Mammary epithelial cell (primary cell): ENCODE measurements at regions of chr2 and their contacts with region 1.

Region 1: DNA sequence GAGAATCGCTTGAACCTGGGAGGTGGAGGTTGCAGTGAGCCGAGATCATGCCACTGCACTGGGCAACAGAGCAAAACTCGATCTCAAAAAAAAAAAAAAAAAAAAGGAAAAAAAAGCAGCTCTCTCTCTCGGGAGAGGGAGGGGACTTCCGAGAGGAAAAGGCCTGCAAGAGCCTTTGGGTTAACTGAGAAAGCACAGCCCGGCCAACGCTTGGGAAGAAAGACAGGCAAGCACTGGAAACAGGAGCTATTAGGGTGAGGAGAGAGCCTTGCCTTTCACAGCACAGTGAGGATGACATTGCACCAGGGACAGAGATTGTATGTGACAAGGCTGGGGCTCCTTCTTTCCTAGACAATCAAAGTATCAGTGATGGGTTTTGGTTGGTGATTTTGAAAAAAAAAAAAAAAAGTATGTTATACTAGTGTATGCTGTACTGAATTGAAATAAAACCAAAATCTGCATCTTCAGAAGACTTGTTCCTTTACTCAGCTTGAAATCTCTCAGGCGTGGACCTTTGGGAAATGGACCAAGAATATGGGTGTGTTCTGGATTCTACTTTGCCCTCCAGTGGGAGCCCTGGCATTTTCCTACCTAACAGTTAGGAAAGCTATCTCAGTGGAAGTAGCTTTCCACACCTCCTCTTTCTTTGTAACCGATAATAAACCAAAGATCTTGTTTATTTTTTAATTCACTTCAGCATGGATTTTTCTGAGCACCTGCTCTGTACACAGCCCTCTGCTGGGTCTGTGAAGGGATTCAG is 16.7 kb downstream of the SRSF7 start:
- DNase-seq: no peak
- H3K4me3 ChIP-seq: no peak overlapping the region
- H3K27ac ChIP-seq: no peak overlapping the region
- H3K4me1 ChIP-seq: no peaks in the 10 kb centered on the region
- H3K27me3 ChIP-seq: no peaks in the 10 kb centered on the region
- CTCF ChIP-seq: no peak

Region 2: DNA sequence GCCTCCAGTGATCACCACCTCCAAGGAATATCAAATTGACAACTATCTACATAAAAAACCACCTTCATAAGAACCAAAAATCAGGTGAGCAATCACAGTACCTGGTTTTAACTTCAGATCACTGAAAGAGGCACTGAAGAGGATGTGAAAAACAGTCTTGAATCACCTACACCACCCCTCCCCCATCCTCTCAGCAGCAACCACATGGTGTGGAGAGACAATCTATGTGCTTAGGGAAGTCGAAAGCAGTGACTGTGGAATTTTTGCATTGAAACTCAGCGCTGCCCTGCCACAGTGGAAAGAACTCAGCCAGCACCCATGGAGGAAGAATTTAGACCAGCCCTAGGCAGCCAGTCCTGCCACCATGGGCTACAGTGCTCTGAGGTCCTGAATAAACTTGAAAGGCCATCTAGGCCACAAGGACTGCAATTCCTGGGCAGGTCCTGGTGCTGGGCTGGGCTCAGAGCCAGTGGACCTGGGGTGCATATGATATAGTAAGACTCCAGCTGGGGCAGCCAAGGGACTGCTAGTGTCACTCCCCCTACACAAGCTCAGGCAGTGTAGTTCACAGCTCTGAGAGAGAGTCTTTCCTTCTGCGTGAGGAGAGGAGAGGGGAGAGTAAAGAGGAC is 433.0 kb before region 1 on chr2:
- CTCF ChIA-PET with region 1: no interaction called
- dilution Hi-C with region 1: no loop called
- in situ Hi-C with region 1: loop called in 1 of 2 experiments (anchors 10 kb)
- intact Hi-C with region 1: no loop called
- DNase-seq: no peak
- H3K4me3 ChIP-seq: no peak overlapping the region
- H3K27ac ChIP-seq: no peak overlapping the region
- H3K4me1 ChIP-seq: peaks cover 11% of the 10 kb centered on the region
- H3K27me3 ChIP-seq: no peaks in the 10 kb centered on the region
- CTCF ChIP-seq: no peak

Region 3: GRCh38 chr2:38344813-38345212 is 389.7 kb before region 1 on chr2:
- CTCF ChIA-PET with region 1: no interaction called
- dilution Hi-C with region 1: loop called (anchors 5 kb)
- in situ Hi-C with region 1: no loop called
- intact Hi-C with region 1: no loop called
- DNase-seq: no peak
- H3K4me3 ChIP-seq: no peak overlapping the region
- H3K27ac ChIP-seq: no peak overlapping the region
- H3K4me1 ChIP-seq: no peaks in the 10 kb centered on the region
- H3K27me3 ChIP-seq: no peaks in the 10 kb centered on the region
- CTCF ChIP-seq: no peak

Region 4: GRCh38 chr2:38535744-38536506 is 198.6 kb before region 1 on chr2:
- CTCF ChIA-PET with region 1: no interaction called
- dilution Hi-C with region 1: loop called (anchors 5 kb)
- in situ Hi-C with region 1: no loop called
- intact Hi-C with region 1: no loop called
- DNase-seq: peak; percentile 53
- H3K4me3 ChIP-seq: peak overlapping the region; percentile 44 to 54 (median 45)
- H3K27ac ChIP-seq: no peak overlapping the region
- H3K4me1 ChIP-seq: peaks cover 6% of the 10 kb centered on the region
- H3K27me3 ChIP-seq: no peaks in the 10 kb centered on the region
- CTCF ChIP-seq: peak; percentile 61 to 87

Region 5: GRCh38 chr2:38586931-38587330 is 147.5 kb before region 1 on chr2:
- CTCF ChIA-PET with region 1: no interaction called
- dilution Hi-C with region 1: no loop called
- in situ Hi-C with region 1: loop called in 1 of 2 experiments (anchors 5 kb)
- intact Hi-C with region 1: no loop called
- DNase-seq: no peak
- H3K4me3 ChIP-seq: no peak overlapping the region
- H3K27ac ChIP-seq: no peak overlapping the region
- H3K4me1 ChIP-seq: no peaks in the 10 kb centered on the region
- H3K27me3 ChIP-seq: no peaks in the 10 kb centered on the region
- CTCF ChIP-seq: no peak

Region 6: DNA sequence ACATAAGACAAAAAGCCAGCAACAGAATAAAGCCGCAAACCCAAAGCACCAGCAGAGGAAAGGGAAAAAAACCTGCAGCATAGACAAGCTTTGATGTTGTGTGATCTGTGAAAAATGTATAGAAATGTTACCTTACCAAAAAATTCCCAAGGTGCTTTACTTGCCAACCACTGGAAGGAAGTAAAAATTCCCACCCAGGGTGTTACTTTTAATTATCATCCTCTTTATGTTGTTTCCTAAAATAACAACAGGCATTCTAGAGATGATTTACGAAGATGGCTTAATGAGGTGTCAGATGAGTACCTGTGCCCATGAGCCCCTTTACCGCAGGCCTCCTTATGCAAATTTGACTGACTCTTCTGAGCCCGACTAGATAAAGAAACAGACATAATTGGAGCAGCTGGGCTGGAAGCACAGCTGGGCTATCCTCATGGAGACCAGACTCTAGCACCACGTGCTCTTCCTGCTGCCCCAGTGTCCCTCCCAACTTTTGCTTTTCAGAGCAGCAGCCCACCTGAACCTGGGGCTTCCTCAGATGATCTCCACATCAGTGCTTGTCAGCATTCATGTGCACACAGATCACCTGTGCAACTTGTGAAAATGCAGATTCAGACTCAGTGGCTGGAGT is 24.8 kb before region 1 on chr2:
- CTCF ChIA-PET with region 1: no interaction called
- dilution Hi-C with region 1: no loop called
- in situ Hi-C with region 1: no loop called
- intact Hi-C with region 1: no loop called
- DNase-seq: no peak
- H3K4me3 ChIP-seq: no peak overlapping the region
- H3K27ac ChIP-seq: no peak overlapping the region
- H3K4me1 ChIP-seq: no peaks in the 10 kb centered on the region
- H3K27me3 ChIP-seq: no peaks in the 10 kb centered on the region
- CTCF ChIP-seq: no peak